ENCODE measurements at regions of chr1 and their contacts with region 1.

Region 1: DNA sequence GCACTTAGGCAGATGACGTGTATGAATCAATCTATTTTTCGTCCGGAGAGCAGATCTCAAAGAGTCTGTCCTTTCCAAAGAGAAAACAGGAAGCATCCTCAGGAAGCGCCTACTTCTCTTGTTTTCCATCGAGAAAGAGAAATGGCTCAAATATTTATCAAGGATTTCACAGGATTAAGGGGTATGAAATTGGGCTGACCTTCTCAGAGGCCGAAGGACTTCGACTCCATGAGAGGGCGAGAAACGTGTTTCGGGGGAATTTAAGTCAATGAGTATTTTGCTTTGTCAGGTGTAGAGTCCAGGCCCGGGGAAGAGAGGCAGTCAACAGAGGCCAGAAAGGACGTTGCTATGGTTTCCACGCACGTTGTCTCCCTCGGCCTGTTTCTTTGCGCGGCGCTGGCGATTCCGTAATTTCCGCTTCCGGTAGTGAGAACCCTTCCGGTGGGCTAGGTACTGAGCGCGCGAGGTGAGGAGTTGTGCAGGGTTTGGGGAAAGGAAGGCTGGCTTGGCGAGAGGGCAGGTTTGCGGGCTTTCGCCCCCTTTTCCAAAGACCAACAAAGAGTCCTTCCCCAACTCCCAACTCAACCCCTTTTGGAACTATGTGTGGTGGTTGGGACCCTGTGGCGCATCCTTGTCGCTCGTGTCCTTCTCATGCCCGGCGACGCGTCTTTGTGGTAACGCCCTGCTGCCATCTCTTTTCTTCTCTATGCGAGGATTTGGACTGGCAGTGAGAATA is at the start of gene MRPS21:
- DNase-seq: peak; percentile 94
- ATAC-seq: peak; percentile 97
- H3K4me3 ChIP-seq: peak within 1 kb of the TSS; percentile 68 to 96 (median 78)
- H3K4me3 Mint-ChIP-seq: peak within 1 kb of the TSS; percentile 95
- H3K27ac ChIP-seq: peak within 1 kb of the TSS; percentile 78 to 97
- H3K27ac Mint-ChIP-seq: peak within 1 kb of the TSS; percentile 98
- H3K4me1 ChIP-seq: peaks cover 13 to 18% of the 10 kb centered on the region in 2 donors
- H3K4me1 Mint-ChIP-seq: peaks cover 20% of the 10 kb centered on the region
- H3K27me3 ChIP-seq: no peaks in the 10 kb centered on the region
- H3K27me3 Mint-ChIP-seq: peaks cover 4% of the 10 kb centered on the region
- CTCF ChIP-seq: no peak
- total RNA-seq, gene MRPS21: 56.5 and 60.4 TPM in 2 replicates

Region 2: GRCh38 chr1:150268705-150269403 is 24.7 kb before region 1 on chr1 and contains the start of gene APH1A:
- CTCF ChIA-PET with region 1: no interaction called
- POLR2A ChIA-PET with region 1: no interaction called
- intact Hi-C with region 1: loop called (anchors 1 kb)
- DNase-seq: peak; percentile 96
- ATAC-seq: peak; percentile 98
- H3K4me3 ChIP-seq: peak within 1 kb of the TSS; percentile 62 to 98 (median 95)
- H3K4me3 Mint-ChIP-seq: peak within 1 kb of the TSS; percentile 97
- H3K27ac ChIP-seq: peak within 1 kb of the TSS; percentile 94 to 95
- H3K27ac Mint-ChIP-seq: peak within 1 kb of the TSS; percentile 98
- H3K4me1 ChIP-seq: peaks cover 19 to 27% of the 10 kb centered on the region in 2 donors
- H3K4me1 Mint-ChIP-seq: peaks cover 30% of the 10 kb centered on the region
- H3K27me3 ChIP-seq: no peaks in the 10 kb centered on the region
- H3K27me3 Mint-ChIP-seq: peaks cover 6% of the 10 kb centered on the region
- CTCF ChIP-seq: no peak
- total RNA-seq, gene APH1A: 134 and 135 TPM in 2 replicates

Region 3: DNA sequence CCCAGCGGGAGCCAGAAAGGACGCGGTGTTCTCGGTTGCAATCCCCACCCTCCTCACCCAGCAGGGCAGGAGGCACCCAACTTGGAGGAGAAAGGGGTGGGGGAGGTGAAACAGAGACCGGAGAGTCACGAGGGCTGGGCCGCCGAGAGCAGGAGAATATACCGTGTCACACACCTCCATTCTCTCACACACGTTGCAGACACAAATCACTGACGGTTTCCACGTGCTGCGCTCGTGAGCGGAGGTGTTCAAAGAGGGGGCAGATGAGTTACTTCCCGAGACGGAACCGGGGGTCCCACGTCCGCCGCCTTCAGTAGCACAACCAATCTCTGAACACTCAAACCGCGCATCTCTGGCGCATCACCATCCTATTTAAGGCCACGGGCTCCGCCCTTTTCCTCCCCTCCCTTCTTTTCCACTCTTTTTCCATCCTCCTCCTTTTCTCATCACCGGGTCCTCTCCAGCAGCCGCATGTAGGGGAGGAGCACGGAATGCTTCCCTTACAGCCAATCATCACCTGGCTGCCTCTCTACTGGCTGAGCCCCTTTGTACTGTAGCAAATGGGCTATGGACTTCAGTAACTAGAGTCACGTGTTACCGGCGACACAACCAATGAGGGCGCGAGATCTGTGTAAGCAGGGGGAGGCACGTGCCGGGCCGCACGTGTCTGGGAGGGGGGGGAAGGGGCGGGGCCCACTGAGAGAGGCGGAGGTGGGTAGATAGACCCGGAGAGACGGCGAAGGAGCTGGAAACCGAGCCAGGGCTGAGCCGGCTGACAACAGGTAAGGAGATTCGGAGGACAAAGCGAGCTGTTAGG is 11.6 kb before region 1 on chr1 and contains the start of gene CIART:
- CTCF ChIA-PET with region 1: interaction called, 7 read pairs
- POLR2A ChIA-PET with region 1: no interaction called
- intact Hi-C with region 1: loop called (anchors 1 kb)
- DNase-seq: peak; percentile 88
- ATAC-seq: peak; percentile 86
- H3K4me3 ChIP-seq: peak within 1 kb of the TSS; percentile 30 to 74 (median 59)
- H3K4me3 Mint-ChIP-seq: peak within 1 kb of the TSS; percentile 91
- H3K27ac ChIP-seq: no peak within 1 kb of the TSS
- H3K27ac Mint-ChIP-seq: peak within 1 kb of the TSS; percentile 73
- H3K4me1 ChIP-seq: peaks cover 20 to 23% of the 10 kb centered on the region in 2 donors
- H3K4me1 Mint-ChIP-seq: peaks cover 18% of the 10 kb centered on the region
- H3K27me3 ChIP-seq: peaks cover 0 to 12% (median 6%) of the 10 kb centered on the region in 4 experiments
- H3K27me3 Mint-ChIP-seq: peaks cover 4% of the 10 kb centered on the region
- CTCF ChIP-seq: no peak
- total RNA-seq, gene CIART: 0.27 TPM in 1 of 2 replicates, not detected in the other

Region 4: GRCh38 chr1:150321826-150322166 is 28.2 kb after region 1 on chr1:
- CTCF ChIA-PET with region 1: interaction called, 3 read pairs
- POLR2A ChIA-PET with region 1: no interaction called
- intact Hi-C with region 1: loop called (anchors 2 kb)
- DNase-seq: no peak
- ATAC-seq: no peak
- H3K4me3 ChIP-seq: peak overlapping the region; percentile 85 to 99 (median 92)
- H3K4me3 Mint-ChIP-seq: peak overlapping the region; percentile 98
- H3K27ac ChIP-seq: peak overlapping the region; percentile 86 to 97
- H3K27ac Mint-ChIP-seq: peak overlapping the region; percentile 98
- H3K4me1 ChIP-seq: peaks cover 13% of the 10 kb centered on the region in 2 donors
- H3K4me1 Mint-ChIP-seq: peaks cover 24% of the 10 kb centered on the region
- H3K27me3 ChIP-seq: no peaks in the 10 kb centered on the region
- H3K27me3 Mint-ChIP-seq: no peaks in the 10 kb centered on the region
- CTCF ChIP-seq: no peak

Measured in B cell (primary cell).